ENCODE measurements at regions of chr5 and their contacts with region 1.

Region 1: DNA sequence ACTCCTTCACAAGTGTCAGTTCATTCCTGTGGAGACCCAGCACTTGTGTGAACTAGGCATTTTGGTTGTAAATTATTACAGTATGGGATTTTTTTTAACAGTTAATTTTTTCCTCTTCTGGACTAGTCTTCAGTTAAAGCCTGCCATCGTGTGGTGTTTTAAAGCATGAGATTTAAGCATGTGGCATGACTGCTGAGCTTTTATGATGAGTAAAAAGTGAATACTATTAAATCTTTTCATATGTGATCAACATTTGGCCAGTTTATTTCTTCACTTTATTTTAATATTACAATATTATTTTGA is 25.0 kb downstream of the LMNB1 start:
- DNase-seq: no peak
- H3K4me3 Mint-ChIP-seq: no peak overlapping the region
- H3K27ac Mint-ChIP-seq: no peak overlapping the region
- H3K4me1 Mint-ChIP-seq: peaks cover 23% of the 10 kb centered on the region
- H3K27me3 Mint-ChIP-seq: no peaks in the 10 kb centered on the region
- CTCF ChIP-seq: no peak

Region 2: DNA sequence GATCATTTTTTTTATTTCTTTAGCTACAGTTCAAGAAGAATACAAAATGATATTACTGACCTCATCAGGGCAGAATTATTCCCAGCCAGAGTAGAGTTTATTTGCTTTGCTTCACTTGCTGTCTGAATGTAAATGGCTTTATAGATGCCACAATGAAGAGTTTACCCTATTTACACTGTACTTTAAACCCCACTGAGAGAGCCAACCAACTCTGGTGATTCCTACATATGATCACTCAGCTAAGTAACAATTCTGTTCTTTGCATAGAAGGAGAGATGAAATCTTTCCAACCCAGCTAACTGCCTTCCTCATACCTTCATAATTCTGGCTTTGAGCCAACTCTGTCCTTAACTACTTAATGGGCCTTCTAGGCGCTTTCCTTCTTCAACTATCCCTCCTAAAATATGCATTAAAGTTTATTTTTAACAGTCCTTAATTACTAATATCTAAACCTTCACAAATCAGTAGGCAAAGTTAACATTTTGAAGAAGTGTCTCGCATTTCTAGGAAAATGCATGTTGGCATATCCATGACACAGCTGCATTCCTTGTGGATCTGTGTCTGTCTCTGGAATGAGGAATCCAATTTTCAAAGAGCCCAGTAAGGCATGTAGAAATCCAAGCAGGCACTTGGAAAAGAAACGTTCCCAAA is 663.5 kb before region 1 on chr5:
- CTCF ChIA-PET with region 1: no interaction called
- intact Hi-C with region 1: no loop called
- DNase-seq: peak; percentile 6
- H3K4me3 Mint-ChIP-seq: no peak overlapping the region
- H3K27ac Mint-ChIP-seq: no peak overlapping the region
- H3K4me1 Mint-ChIP-seq: peaks cover 9% of the 10 kb centered on the region
- H3K27me3 Mint-ChIP-seq: no peaks in the 10 kb centered on the region
- CTCF ChIP-seq: no peak

Region 3: GRCh38 chr5:126676195-126676624 is 125.7 kb before region 1 on chr5:
- CTCF ChIA-PET with region 1: interaction called, 8 read pairs
- intact Hi-C with region 1: loop called (anchors 1 kb)
- DNase-seq: peak; percentile 71
- H3K4me3 Mint-ChIP-seq: no peak overlapping the region
- H3K27ac Mint-ChIP-seq: no peak overlapping the region
- H3K4me1 Mint-ChIP-seq: peaks cover 16% of the 10 kb centered on the region
- H3K27me3 Mint-ChIP-seq: no peaks in the 10 kb centered on the region
- CTCF ChIP-seq: peak; percentile 74